Dorsolateral prefrontal cortex (tissue), 120 donors: ENCODE measurements at regions of chr3 and their contacts with region 1.

Region 1: DNA sequence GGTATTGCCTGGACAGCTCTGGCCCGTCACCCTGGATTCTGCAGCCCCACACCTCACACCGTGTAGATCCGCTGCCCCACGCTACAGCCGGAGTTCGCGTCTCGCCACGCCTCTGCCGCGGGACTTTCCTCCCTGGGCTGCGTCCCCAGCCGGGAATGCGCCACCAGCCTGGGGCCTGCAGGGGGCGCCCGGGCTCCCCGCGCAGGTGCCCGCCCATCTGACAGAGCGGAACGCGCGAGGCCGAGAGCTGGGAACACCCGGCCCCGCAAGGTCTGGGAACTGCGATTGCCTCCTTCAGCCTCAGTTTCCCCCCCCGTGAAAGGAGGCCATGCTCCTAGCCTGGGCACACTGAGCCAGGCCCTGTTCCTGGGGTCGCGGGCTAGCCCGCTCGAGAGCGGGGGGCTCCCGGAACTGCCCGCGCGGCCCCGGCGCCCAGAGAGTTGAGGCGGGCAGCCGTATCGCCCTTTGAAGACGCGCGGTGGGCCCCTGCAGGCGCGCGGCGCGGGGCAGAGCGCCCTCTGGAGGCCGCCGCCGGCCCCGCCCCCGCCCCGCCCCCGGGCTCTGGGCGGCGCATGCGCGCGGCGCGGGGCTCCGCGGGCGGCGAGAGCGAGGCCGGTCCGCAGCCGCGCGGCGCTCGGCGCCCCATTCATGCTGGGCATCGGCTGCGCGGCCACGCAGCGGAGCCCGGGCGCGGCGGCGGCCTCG is at the start of gene PLXNA1:
- DNase-seq: peak in 9 of 10 donors; percentile 52 to 83 (median 59)
- H3K4me3 ChIP-seq: peak within 1 kb of the TSS; percentile 57 to 91 (median 79)
- H3K27ac ChIP-seq: peak within 1 kb of the TSS in 40 of 59 donors; percentile 15 to 85 (median 74)
- H3K27me3 ChIP-seq: no peaks in the 10 kb centered on the region
- CTCF ChIP-seq: peak; percentile 45 to 95 (median 82)
- total RNA-seq, gene PLXNA1: 28.6 to 94.1 (median 62.9) TPM

Region 2: GRCh38 chr3:126522363-126522788 is 460.2 kb before region 1 on chr3:
- intact Hi-C with region 1: loop called in 1 of 2 experiments (anchors 10 kb)
- DNase-seq: peak in 9 of 10 donors; percentile 36 to 77 (median 68)
- H3K4me3 ChIP-seq: no peak overlapping the region
- H3K27ac ChIP-seq: peak overlapping the region in 10 of 59 donors; percentile 12 to 85 (median 58)
- H3K27me3 ChIP-seq: peaks cover 0 to 17% (median 0%) of the 10 kb centered on the region in 45 donors
- CTCF ChIP-seq: peak; percentile 82 to 97 (median 92)

Region 3: DNA sequence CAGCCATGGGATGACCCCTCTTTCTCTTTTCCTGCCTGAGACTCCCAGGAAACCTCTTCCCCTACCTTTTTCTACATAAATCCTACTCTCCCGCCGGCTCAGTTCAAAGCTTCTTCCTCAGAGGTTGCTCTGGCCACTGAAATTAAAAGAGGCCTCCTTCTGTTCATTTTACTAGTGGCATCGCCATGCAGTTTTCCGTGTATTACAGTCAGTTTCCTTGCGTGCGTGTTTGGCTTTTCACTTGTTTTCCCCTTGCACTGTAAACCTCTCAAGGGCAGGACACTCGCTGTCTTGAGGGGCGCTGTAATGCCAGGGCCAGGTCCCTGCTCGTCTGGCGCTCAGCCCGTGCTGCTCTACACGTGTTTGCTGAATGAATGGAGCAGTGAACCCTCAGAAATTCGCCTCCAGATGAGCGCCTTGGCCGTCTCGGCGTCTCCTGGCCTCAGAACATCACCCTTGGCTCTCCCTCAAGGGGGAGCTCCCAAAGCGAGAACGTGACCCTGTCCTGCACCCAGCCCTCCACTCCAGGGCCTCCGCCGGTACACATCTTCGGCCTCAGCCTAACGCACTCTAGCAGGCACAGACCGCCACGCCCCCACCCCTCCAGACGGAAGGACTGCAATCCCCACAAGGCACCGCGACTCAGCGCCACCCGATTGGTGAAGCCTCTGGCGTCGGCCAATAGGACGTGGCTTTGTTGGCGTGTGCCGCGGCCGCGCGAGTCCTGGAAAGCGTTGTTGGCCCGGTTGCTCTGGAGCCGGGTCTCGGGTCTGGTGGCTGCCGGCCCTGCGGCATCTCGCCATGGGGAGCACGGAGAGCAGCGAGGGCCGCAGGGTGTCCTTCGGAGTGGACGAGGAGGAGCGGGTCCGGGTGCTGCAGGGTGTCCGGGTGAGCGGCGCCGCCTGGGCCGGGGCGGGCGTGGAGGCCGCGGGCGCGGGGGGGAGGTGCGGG is 278.8 kb before region 1 on chr3 and contains the start of gene CHCHD6:
- intact Hi-C with region 1: loop called in 1 of 2 experiments (anchors 5 kb)
- DNase-seq: peak; percentile 89 to 96 (median 93)
- H3K4me3 ChIP-seq: peak within 1 kb of the TSS; percentile 54 to 95 (median 85)
- H3K27ac ChIP-seq: peak within 1 kb of the TSS in 29 of 59 donors; percentile 2 to 84 (median 36)
- H3K27me3 ChIP-seq: peaks cover 0 to under 1% (median 0%) of the 10 kb centered on the region in 45 donors
- CTCF ChIP-seq: peak in 35 of 56 donors; percentile 9 to 70 (median 36)
- total RNA-seq, gene CHCHD6: 23.5 to 101 (median 41.5) TPM

Region 4: GRCh38 chr3:126752303-126752842 is 230.2 kb before region 1 on chr3:
- intact Hi-C with region 1: loop called (anchors 1 to 2 kb)
- DNase-seq: peak; percentile 72 to 87 (median 80)
- H3K4me3 ChIP-seq: no peak overlapping the region
- H3K27ac ChIP-seq: peak overlapping the region in 5 of 59 donors; percentile 8 to 38 (median 20)
- H3K27me3 ChIP-seq: no peaks in the 10 kb centered on the region
- CTCF ChIP-seq: peak; percentile 67 to 96 (median 88)

Region 5: DNA sequence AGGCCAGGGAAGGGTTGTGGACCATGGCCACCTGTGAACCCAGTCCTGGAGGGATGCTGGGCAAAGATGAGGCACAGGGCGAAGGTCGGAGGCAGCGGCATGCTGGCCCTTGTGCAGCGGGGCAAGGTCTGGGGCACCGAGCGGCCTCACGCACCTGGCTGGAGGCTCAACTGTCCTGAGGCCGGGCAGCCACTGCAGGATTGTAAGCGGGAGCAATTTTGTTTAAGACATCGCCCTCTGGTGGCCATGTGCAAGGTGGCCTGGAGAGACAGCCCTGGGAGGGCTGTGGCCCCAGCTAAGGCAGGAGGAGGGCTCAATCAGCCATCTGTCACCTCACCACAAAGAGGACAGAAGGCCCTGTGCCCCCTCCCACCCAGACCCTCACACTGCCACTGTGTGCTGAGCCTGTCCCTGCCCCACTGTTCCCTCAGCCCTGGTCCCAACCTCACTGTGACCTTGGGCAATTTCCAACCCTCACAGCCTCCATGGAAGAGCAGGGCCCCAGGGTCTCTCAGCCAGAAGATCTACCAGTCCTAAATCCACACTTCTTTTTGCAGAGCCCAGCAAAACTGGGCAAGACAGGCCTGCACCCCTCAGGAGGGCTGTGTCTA is 561.7 kb after region 1 on chr3:
- intact Hi-C with region 1: loop called (anchors 5 to 10 kb)
- DNase-seq: peak in 9 of 10 donors; percentile 50 to 79 (median 75)
- H3K4me3 ChIP-seq: no peak overlapping the region
- H3K27ac ChIP-seq: peak overlapping the region in 41 of 59 donors; percentile 1 to 82 (median 57)
- H3K27me3 ChIP-seq: no peaks in the 10 kb centered on the region
- CTCF ChIP-seq: peak; percentile 56 to 90 (median 82)